Naive thymus-derived CD4-positive, alpha-beta T cell (primary cell): ENCODE measurements at regions of chr19 and their contacts with region 1.

Region 1: GRCh38 chr19:21308773-21309172 is 20.4 kb downstream of the ZNF708 start:
- DNase-seq: no peak
- ATAC-seq: no peak
- H3K4me3 ChIP-seq: no peak overlapping the region
- H3K4me3 Mint-ChIP-seq: no peak overlapping the region
- H3K27ac ChIP-seq: no peak overlapping the region
- H3K27ac Mint-ChIP-seq: peak overlapping the region in 5 of 9 donors; percentile 33 to 52 (median 46)
- H3K4me1 ChIP-seq: no peaks in the 10 kb centered on the region
- H3K4me1 Mint-ChIP-seq: peaks cover 0 to 31% (median 19%) of the 10 kb centered on the region in 7 donors
- H3K27me3 ChIP-seq: no peaks in the 10 kb centered on the region
- H3K27me3 Mint-ChIP-seq: no peaks in the 10 kb centered on the region

Region 2: GRCh38 chr19:21358768-21359451 is 50.1 kb after region 1 on chr19 and contains the start of gene ZNF738:
- CTCF ChIA-PET with region 1: no interaction called
- POLR2A ChIA-PET with region 1: no interaction called
- intact Hi-C with region 1: loop called in 1 of 2 experiments (anchors 10 kb)
- DNase-seq: peak; percentile 59 to 87 (median 76)
- ATAC-seq: peak; percentile 98
- H3K4me3 ChIP-seq: peak within 1 kb of the TSS; percentile 98
- H3K4me3 Mint-ChIP-seq: peak within 1 kb of the TSS; percentile 93 to 99 (median 98)
- H3K27ac ChIP-seq: peak within 1 kb of the TSS; percentile 77
- H3K27ac Mint-ChIP-seq: peak within 1 kb of the TSS; percentile 85 to 98 (median 91)
- H3K4me1 ChIP-seq: peaks cover 0 to 6% of the 10 kb centered on the region in 2 donors
- H3K4me1 Mint-ChIP-seq: peaks cover 6 to 17% (median 14%) of the 10 kb centered on the region in 7 donors
- H3K27me3 ChIP-seq: no peaks in the 10 kb centered on the region
- H3K27me3 Mint-ChIP-seq: no peaks in the 10 kb centered on the region
- total RNA-seq, gene ZNF738: 6.4 to 11.4 (median 9.8) TPM

Region 3: DNA sequence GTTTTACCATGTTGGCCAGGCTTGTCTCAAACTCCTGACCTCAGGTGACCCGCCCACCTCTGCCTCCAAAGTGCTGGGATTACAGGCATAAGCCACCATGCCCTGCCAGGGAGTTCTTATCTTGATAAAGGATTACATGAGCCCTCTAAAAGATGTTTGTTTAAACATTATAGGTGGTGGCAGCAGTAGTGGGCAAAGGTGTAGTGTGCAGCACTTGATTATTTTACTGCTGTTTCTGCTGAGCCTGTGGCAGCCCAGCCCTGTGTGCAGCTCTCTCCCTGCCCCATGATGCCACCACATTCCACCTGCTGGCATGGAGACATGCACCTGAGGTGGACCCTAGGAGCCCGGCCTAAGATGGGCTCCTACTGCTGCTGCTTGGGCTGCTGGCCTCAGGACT is 250.7 kb after region 1 on chr19:
- CTCF ChIA-PET with region 1: no interaction called
- POLR2A ChIA-PET with region 1: no interaction called
- intact Hi-C with region 1: no loop called
- DNase-seq: no peak
- ATAC-seq: no peak
- H3K4me3 ChIP-seq: no peak overlapping the region
- H3K4me3 Mint-ChIP-seq: no peak overlapping the region
- H3K27ac ChIP-seq: no peak overlapping the region
- H3K27ac Mint-ChIP-seq: no peak overlapping the region
- H3K4me1 ChIP-seq: no peaks in the 10 kb centered on the region
- H3K4me1 Mint-ChIP-seq: peaks cover 0 to 9% (median 1%) of the 10 kb centered on the region in 7 donors
- H3K27me3 ChIP-seq: no peaks in the 10 kb centered on the region
- H3K27me3 Mint-ChIP-seq: no peaks in the 10 kb centered on the region